GM12878 (cell line): ENCODE measurements at regions of chr20 and their contacts with region 1.

Region 1: GRCh38 chr20:32664678-32665159 is 9.0 kb downstream of the C20orf203 start:
- DNase-seq: no peak
- ATAC-seq: peak; percentile 40
- H3K4me3 ChIP-seq: no peak overlapping the region
- H3K27ac ChIP-seq: no peak overlapping the region
- H3K4me1 ChIP-seq: peaks cover 8% of the 10 kb centered on the region
- H3K27me3 ChIP-seq: no peaks in the 10 kb centered on the region
- CTCF ChIP-seq: no peak
- EP300 ChIP-seq: no peak
- POLR2A ChIP-seq: no peak
- RAD21 ChIP-seq: no peak

Region 2: DNA sequence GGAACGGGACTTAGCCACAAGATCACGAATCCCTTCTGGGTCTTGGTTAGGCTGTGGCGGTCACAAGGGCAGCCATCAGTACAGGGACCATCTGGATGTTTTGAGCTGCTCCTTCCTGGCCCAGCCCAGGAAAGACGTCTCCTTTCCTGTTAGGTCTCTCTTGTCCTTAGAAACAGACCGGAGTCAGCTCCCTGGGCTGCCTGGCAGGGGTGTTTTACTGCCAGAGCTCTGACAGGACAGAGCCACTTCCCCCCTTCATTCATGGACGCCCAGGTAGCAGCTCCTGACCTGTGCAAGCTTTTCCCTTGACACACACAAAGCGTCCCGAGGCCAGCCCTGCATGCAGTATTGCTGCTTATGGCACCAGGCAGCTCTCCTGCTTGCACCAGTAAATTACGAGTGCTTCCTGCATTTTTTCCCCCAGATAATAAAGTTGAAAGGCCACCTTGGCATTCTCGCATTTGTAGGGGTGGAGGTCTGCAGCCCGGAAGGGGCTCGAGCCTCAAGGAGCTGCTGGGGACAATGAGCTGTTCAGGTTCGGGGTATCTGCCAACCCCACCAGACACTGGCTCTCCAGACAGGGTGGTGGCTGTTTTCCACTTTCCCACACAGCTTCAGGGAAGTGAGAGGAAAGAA is 167.0 kb before region 1 on chr20:
- CTCF ChIA-PET with region 1: no interaction called
- POLR2A ChIA-PET with region 1: interaction called, 10 read pairs
- RAD21 ChIA-PET with region 1: no interaction called
- SMC1A ChIA-PET with region 1: no interaction called
- in situ Hi-C with region 1: no loop called
- intact Hi-C with region 1: no loop called
- DNase-seq: no peak
- ATAC-seq: no peak
- H3K4me3 ChIP-seq: no peak overlapping the region
- H3K27ac ChIP-seq: no peak overlapping the region
- H3K4me1 ChIP-seq: no peaks in the 10 kb centered on the region
- H3K27me3 ChIP-seq: no peaks in the 10 kb centered on the region
- CTCF ChIP-seq: no peak
- EP300 ChIP-seq: no peak
- POLR2A ChIP-seq: no peak
- RAD21 ChIP-seq: no peak